K562 (cell line): ENCODE measurements at regions of chr6 and their contacts with region 1.

Region 1: GRCh38 chr6:13125841-13126240 is 202.5 kb downstream of the TBC1D7 start:
- DNase-seq: no peak
- ATAC-seq: no peak
- H3K4me3 ChIP-seq: no peak overlapping the region
- H3K27ac ChIP-seq: no peak overlapping the region
- H3K4me1 ChIP-seq: no peaks in the 10 kb centered on the region
- H3K27me3 ChIP-seq: peaks cover 5 to 8% of the 10 kb centered on the region in 2 experiments; a peak in 3 of 5 replicates
- CTCF ChIP-seq: no peak
- EP300 ChIP-seq: no peak
- POLR2A ChIP-seq: no peak
- RAD21 ChIP-seq: no peak

Region 2: GRCh38 chr6:13759025-13759424 is 633.2 kb after region 1 on chr6:
- CTCF ChIA-PET with region 1: no interaction called
- POLR2A ChIA-PET with region 1: no interaction called
- in situ Hi-C with region 1: no loop called
- intact Hi-C with region 1: loop called (anchors 5 kb)
- DNase-seq: no peak
- ATAC-seq: peak; percentile 58
- H3K4me3 ChIP-seq: no peak overlapping the region
- H3K27ac ChIP-seq: no peak overlapping the region
- H3K4me1 ChIP-seq: no peaks in the 10 kb centered on the region
- H3K27me3 ChIP-seq: peaks cover 0 to 4% of the 10 kb centered on the region in 2 experiments; a peak in 1 of 5 replicates
- CTCF ChIP-seq: peak in 1 of 3 experiments; percentile 62; a peak in 2 of 6 replicates
- EP300 ChIP-seq: no peak
- POLR2A ChIP-seq: no peak
- RAD21 ChIP-seq: no peak